ENCODE measurements at regions of chr14 and their contacts with region 1.

Region 1: GRCh38 chr14:60648934-60649874 is at the start of gene SIX1:
- DNase-seq: peak; percentile 95
- ATAC-seq: peak; percentile 93
- H3K4me3 ChIP-seq: peak within 1 kb of the TSS; percentile 74
- H3K27ac ChIP-seq: peak within 1 kb of the TSS; percentile 98
- H3K4me1 ChIP-seq: peaks cover 11% of the 10 kb centered on the region
- H3K27me3 ChIP-seq: no peaks in the 10 kb centered on the region; the same call in 1 of the 2 replicates
- CTCF ChIP-seq: no peak
- POLR2A ChIP-seq: peak; percentile 79
- RAD21 ChIP-seq: no peak
- total RNA-seq, gene SIX1: 7.7 and 8.6 TPM in 2 replicates

Region 2: GRCh38 chr14:60637479-60638315 is 11.5 kb before region 1 on chr14:
- CTCF ChIA-PET with region 1: interaction called, 14 read pairs
- POLR2A ChIA-PET with region 1: no interaction called
- dilution Hi-C with region 1: no loop called
- in situ Hi-C with region 1: no loop called
- intact Hi-C with region 1: no loop called
- DNase-seq: peak; percentile 53
- ATAC-seq: peak; percentile 76
- H3K4me3 ChIP-seq: peak overlapping the region; percentile 6; the same call in 1 of the 2 replicates
- H3K27ac ChIP-seq: peak overlapping the region; percentile 58
- H3K4me1 ChIP-seq: peaks cover 16% of the 10 kb centered on the region
- H3K27me3 ChIP-seq: no peaks in the 10 kb centered on the region
- CTCF ChIP-seq: 0 out of 2 replicates have a peak, but pooled peaks have one; percentile 9
- POLR2A ChIP-seq: no peak
- RAD21 ChIP-seq: 0 out of 2 replicates have a peak, but pooled peaks have one; percentile 6

Region 3: DNA sequence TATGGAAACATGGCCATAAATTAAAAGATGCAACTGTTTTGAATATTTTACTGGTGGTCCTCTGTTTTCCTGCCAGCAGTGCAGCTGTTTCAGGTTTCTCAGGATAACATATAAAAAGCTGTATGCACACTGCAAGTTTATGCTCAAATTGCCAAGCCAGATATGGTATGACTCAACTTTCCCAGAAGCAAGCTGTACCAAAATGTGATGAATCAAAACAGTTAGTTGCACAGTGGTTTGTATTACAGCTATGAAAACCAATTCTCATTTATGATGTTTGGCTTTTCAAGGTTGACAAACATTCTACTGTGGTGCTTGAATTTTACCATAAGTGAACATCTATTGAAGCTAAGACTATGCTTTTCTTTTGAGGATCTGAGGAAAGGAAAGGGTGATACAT is 316.2 kb after region 1 on chr14:
- CTCF ChIA-PET with region 1: no interaction called
- POLR2A ChIA-PET with region 1: interaction called, 11 read pairs
- dilution Hi-C with region 1: no loop called
- in situ Hi-C with region 1: no loop called
- intact Hi-C with region 1: no loop called
- DNase-seq: peak; percentile 92
- ATAC-seq: peak; percentile 93
- H3K4me3 ChIP-seq: no peak overlapping the region
- H3K27ac ChIP-seq: peak overlapping the region; percentile 27; the same call in 1 of the 2 replicates
- H3K4me1 ChIP-seq: peaks cover 10% of the 10 kb centered on the region
- H3K27me3 ChIP-seq: no peaks in the 10 kb centered on the region
- CTCF ChIP-seq: no peak
- POLR2A ChIP-seq: no peak
- RAD21 ChIP-seq: no peak

Region 4: GRCh38 chr14:61025251-61026223 is 376.3 kb after region 1 on chr14:
- CTCF ChIA-PET with region 1: no interaction called
- POLR2A ChIA-PET with region 1: interaction called, 3 read pairs
- dilution Hi-C with region 1: loop called (anchors 25 kb)
- in situ Hi-C with region 1: no loop called
- intact Hi-C with region 1: loop called (anchors 2 kb)
- DNase-seq: peak; percentile 80
- ATAC-seq: peak; percentile 81
- H3K4me3 ChIP-seq: no peak overlapping the region
- H3K27ac ChIP-seq: peak overlapping the region; percentile 24; the same call in 1 of the 2 replicates
- H3K4me1 ChIP-seq: peaks cover 3% of the 10 kb centered on the region; the same call in 1 of the 2 replicates
- H3K27me3 ChIP-seq: no peaks in the 10 kb centered on the region
- CTCF ChIP-seq: peak; percentile 84
- POLR2A ChIP-seq: no peak
- RAD21 ChIP-seq: peak; percentile 81

Region 5: GRCh38 chr14:61147831-61148549 is 498.8 kb after region 1 on chr14:
- CTCF ChIA-PET with region 1: no interaction called
- POLR2A ChIA-PET with region 1: no interaction called
- dilution Hi-C with region 1: no loop called
- in situ Hi-C with region 1: no loop called
- intact Hi-C with region 1: loop called (anchors 5 kb)
- DNase-seq: peak; percentile 100
- ATAC-seq: peak; percentile 60
- H3K4me3 ChIP-seq: no peak overlapping the region
- H3K27ac ChIP-seq: peak overlapping the region; percentile 99
- H3K4me1 ChIP-seq: peaks cover 36% of the 10 kb centered on the region
- H3K27me3 ChIP-seq: no peaks in the 10 kb centered on the region
- CTCF ChIP-seq: no peak
- POLR2A ChIP-seq: peak; percentile 22; the same call in 1 of the 2 replicates
- RAD21 ChIP-seq: no peak

Region 6: GRCh38 chr14:61568572-61569131 is 919.4 kb after region 1 on chr14:
- CTCF ChIA-PET with region 1: no interaction called
- POLR2A ChIA-PET with region 1: no interaction called
- dilution Hi-C with region 1: no loop called
- in situ Hi-C with region 1: loop called (anchors 25 kb)
- intact Hi-C with region 1: no loop called
- DNase-seq: no peak
- ATAC-seq: no peak
- H3K4me3 ChIP-seq: no peak overlapping the region
- H3K27ac ChIP-seq: peak overlapping the region; percentile 78
- H3K4me1 ChIP-seq: peaks cover 55% of the 10 kb centered on the region
- H3K27me3 ChIP-seq: no peaks in the 10 kb centered on the region
- CTCF ChIP-seq: no peak
- POLR2A ChIP-seq: no peak
- RAD21 ChIP-seq: no peak